WTC11 (cell line): ENCODE measurements at regions of chr6 and their contacts with region 1.

Region 1: DNA sequence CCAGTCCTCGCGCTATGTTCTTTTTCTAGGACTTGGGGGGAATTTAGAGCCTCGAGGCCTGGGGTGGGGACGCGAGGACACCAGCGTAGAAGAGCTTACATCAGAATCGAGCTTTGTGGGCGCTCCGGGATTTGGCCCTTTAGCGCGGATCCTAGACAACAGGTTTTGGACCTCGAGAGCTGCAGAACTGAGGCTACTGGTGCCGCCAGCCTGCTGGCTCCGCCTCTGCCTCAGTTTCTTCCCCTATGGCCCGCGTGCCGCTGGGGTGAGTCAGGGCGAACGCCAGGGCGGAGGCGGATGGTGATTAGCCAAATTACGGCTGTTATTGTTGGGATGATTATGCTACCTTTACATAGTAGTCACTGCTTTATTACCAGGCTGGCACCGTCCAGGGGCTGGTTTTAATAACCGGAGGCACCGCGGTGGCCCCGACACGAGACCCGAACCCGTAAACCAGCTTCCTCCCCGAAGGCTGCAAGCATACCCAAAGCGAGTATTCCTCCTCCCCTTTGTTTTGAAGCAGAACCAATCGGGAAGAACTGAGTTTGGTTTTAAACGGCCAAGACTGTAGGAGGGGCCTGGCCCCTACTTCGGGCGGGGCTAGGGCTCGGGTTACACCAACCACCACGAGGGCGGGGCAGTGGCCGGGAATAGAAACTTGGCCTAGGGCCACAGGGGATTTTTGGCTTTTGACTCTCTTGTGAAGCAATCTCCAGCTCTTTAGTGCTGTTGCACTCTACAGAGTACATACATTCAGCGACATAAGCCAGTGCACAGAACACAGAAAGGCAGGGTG is 639 bp upstream of the GTPBP2 start:
- DNase-seq: peak; percentile 94
- ATAC-seq: peak; percentile 81
- H3K4me3 Mint-ChIP-seq: peak overlapping the region; percentile 98
- H3K27ac Mint-ChIP-seq: peak overlapping the region; percentile 100
- H3K4me1 Mint-ChIP-seq: peaks cover 17% of the 10 kb centered on the region
- H3K27me3 Mint-ChIP-seq: no peaks in the 10 kb centered on the region
- CTCF ChIP-seq: no peak

Region 2: DNA sequence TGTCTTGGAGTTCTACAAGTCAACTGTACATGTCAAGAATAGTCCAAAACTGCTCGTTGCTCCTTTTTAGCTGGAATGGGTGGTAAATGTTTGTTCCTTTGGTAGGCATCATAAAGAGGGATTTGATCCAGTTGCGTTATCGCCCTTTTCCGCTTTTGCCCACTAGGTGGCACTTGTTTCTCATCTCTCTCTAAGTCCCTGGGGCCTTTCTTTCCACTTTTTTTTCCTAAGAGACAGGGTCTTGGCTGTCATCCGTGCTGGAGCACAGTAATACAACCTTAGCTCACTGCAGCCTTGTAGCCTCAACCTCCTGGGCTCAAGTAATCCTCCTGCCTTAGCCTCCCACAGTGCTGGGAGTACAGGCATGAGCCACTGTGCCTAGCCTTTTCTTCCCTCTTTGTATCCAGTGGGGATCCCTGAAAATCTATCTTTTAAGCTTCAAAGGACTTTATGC is 21.4 kb before region 1 on chr6:
- CTCF ChIA-PET with region 1: interaction called, 13 read pairs
- POLR2A ChIA-PET with region 1: interaction called, 4 read pairs
- DNase-seq: peak; percentile 79
- ATAC-seq: peak; percentile 84
- H3K4me3 Mint-ChIP-seq: no peak overlapping the region
- H3K27ac Mint-ChIP-seq: peak overlapping the region; percentile 48; the same call in 1 of the 2 replicates
- H3K4me1 Mint-ChIP-seq: no peaks in the 10 kb centered on the region
- H3K27me3 Mint-ChIP-seq: no peaks in the 10 kb centered on the region
- CTCF ChIP-seq: peak; percentile 76

Region 3: GRCh38 chr6:43644931-43645612 is 15.4 kb after region 1 on chr6 and contains the start of gene RSPH9:
- CTCF ChIA-PET with region 1: interaction called, 16 read pairs
- POLR2A ChIA-PET with region 1: interaction called, 32 read pairs
- DNase-seq: peak; percentile 99
- ATAC-seq: peak; percentile 94
- H3K4me3 Mint-ChIP-seq: peak within 1 kb of the TSS; percentile 76
- H3K27ac Mint-ChIP-seq: peak within 1 kb of the TSS; percentile 99
- H3K4me1 Mint-ChIP-seq: peaks cover 15% of the 10 kb centered on the region
- H3K27me3 Mint-ChIP-seq: peaks cover 3% of the 10 kb centered on the region; the same call in 1 of the 2 replicates
- CTCF ChIP-seq: no peak
- total RNA-seq, gene RSPH9: 0.16 to 0.35 TPM (median 0.32 TPM) in 3 replicates